ENCODE measurements at regions of chr4 and their contacts with region 1.

Region 1: GRCh38 chr4:152100379-152101201 is 339.8 kb upstream of the GATB start:
- DNase-seq: peak; percentile 70 to 96 (median 80)
- ATAC-seq: peak; percentile 84
- H3K4me3 ChIP-seq: peak overlapping the region; percentile 32
- H3K4me3 Mint-ChIP-seq: peak overlapping the region; percentile 80
- H3K27ac ChIP-seq: peak overlapping the region; percentile 86 to 89
- H3K27ac Mint-ChIP-seq: peak overlapping the region; percentile 95
- H3K4me1 ChIP-seq: peaks cover 100% of the 10 kb centered on the region
- H3K4me1 Mint-ChIP-seq: peaks cover 90% of the 10 kb centered on the region
- H3K27me3 ChIP-seq: no peaks in the 10 kb centered on the region
- H3K27me3 Mint-ChIP-seq: no peaks in the 10 kb centered on the region
- CTCF ChIP-seq: no peak

Region 2: DNA sequence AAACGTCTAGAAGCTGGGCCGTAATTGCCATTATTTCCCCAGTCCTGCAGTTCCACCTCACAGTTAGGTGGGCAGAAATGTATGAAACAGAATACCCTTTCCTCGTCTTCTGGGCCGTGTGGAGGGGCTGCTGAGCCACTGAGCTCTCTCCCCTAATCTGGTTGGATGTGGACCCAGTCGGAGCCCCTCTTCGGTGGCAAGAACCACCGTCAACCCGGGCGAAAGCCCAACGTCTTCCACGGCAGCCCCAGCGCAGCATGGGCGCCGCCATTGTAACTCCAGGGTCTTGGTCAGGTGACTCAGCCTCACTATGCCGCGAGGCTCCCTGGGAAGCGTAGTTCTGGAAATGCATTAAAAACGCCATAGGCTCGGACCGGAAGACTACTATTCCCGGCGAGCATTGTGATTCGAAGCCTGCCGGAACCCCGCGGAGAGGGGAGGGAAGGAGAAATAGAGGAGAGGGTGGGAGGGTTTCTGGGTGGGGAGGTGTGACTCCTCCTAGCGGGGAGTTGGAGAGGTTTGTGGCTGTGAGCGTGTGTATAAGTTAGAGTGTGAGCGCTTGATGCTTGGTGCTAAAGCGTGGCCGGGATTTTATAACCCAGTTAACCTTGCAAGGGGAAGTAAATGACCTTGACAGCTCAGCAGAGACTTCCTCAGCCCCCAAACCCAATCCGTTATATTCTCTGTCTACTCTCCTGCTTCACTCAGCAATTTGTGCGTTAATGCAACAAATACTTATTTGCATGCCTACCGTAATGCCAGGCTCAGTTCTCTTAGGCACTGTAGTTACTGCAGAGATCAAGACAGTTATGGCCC is 339.7 kb before region 1 on chr4 and contains the start of gene GATB:
- CTCF ChIA-PET with region 1: no interaction called
- POLR2A ChIA-PET with region 1: interaction called, 5 read pairs
- intact Hi-C with region 1: loop called (anchors 2 to 5 kb)
- DNase-seq: peak; percentile 85 to 97 (median 88)
- ATAC-seq: peak; percentile 97
- H3K4me3 ChIP-seq: peak within 1 kb of the TSS; percentile 85
- H3K4me3 Mint-ChIP-seq: peak within 1 kb of the TSS; percentile 96
- H3K27ac ChIP-seq: peak within 1 kb of the TSS; percentile 53 to 55
- H3K27ac Mint-ChIP-seq: peak within 1 kb of the TSS; percentile 86
- H3K4me1 ChIP-seq: peaks cover 12% of the 10 kb centered on the region
- H3K4me1 Mint-ChIP-seq: peaks cover 17% of the 10 kb centered on the region
- H3K27me3 ChIP-seq: no peaks in the 10 kb centered on the region
- H3K27me3 Mint-ChIP-seq: no peaks in the 10 kb centered on the region
- CTCF ChIP-seq: peak; percentile 60
- total RNA-seq, gene GATB: 3.6 to 5.8 TPM

Region 3: GRCh38 chr4:152014280-152014679 is 86.3 kb before region 1 on chr4:
- CTCF ChIA-PET with region 1: no interaction called
- POLR2A ChIA-PET with region 1: interaction called, 12 read pairs
- intact Hi-C with region 1: loop called in 1 of 2 experiments (anchors 5 kb)
- DNase-seq: peak in 11 of 14 experiments; percentile 13 to 73 (median 35)
- ATAC-seq: peak; percentile 26
- H3K4me3 ChIP-seq: no peak overlapping the region
- H3K4me3 Mint-ChIP-seq: no peak overlapping the region
- H3K27ac ChIP-seq: peak overlapping the region in 1 of 2 donors; percentile 17
- H3K27ac Mint-ChIP-seq: peak overlapping the region; percentile 74
- H3K4me1 ChIP-seq: peaks cover 51% of the 10 kb centered on the region
- H3K4me1 Mint-ChIP-seq: peaks cover 64% of the 10 kb centered on the region
- H3K27me3 ChIP-seq: no peaks in the 10 kb centered on the region
- H3K27me3 Mint-ChIP-seq: no peaks in the 10 kb centered on the region
- CTCF ChIP-seq: no peak

Region 4: DNA sequence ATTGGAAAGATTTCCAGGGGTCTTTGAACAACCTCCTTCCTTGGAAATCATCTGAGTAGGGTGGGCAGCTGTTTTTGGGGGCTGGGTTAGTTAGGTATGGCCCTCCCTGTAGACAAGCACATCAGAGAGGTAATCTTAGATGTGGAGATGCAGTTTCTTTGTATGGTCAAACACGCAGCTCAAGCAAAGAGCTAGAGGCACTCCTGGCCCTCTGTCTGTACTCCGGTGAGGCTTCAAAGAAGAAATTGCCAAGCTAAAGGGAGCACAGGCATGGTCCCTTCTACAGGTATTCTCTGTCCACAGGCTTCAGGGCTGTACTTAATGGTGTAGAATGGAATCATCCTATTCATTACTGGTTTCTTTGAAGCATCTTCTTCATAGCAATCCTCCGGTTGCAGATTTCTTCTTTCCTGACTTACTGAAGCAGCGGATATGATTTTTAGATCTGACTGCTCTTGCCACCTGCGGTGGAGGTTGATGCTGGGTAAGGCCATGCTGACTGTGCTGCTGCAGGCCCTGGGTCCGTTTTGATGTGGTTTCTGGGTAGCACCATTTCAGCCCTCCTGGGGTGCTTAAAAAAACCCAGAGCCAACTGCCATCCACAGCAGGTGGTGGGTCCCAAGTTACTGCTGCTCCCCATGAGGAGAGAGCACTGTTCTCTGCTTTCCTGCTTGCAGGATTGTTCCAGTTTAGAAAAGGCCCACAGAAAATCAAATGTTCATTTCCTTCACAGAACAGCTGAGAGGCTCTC is 20.9 kb before region 1 on chr4:
- CTCF ChIA-PET with region 1: interaction called, 3 read pairs
- POLR2A ChIA-PET with region 1: interaction called, 52 read pairs
- intact Hi-C with region 1: loop called in 1 of 2 experiments (anchors 2 kb)
- DNase-seq: peak in 10 of 14 experiments; percentile 25 to 83 (median 53)
- ATAC-seq: peak; percentile 94
- H3K4me3 ChIP-seq: no peak overlapping the region
- H3K4me3 Mint-ChIP-seq: peak overlapping the region; percentile 38
- H3K27ac ChIP-seq: peak overlapping the region; percentile 40 to 63
- H3K27ac Mint-ChIP-seq: peak overlapping the region; percentile 93
- H3K4me1 ChIP-seq: peaks cover 56% of the 10 kb centered on the region
- H3K4me1 Mint-ChIP-seq: peaks cover 97% of the 10 kb centered on the region
- H3K27me3 ChIP-seq: no peaks in the 10 kb centered on the region
- H3K27me3 Mint-ChIP-seq: no peaks in the 10 kb centered on the region
- CTCF ChIP-seq: no peak

Region 5: GRCh38 chr4:152185786-152186550 is 85.4 kb after region 1 on chr4:
- CTCF ChIA-PET with region 1: no interaction called
- POLR2A ChIA-PET with region 1: interaction called, 11 read pairs
- intact Hi-C with region 1: no loop called
- DNase-seq: no peak
- ATAC-seq: no peak
- H3K4me3 ChIP-seq: no peak overlapping the region
- H3K4me3 Mint-ChIP-seq: no peak overlapping the region
- H3K27ac ChIP-seq: no peak overlapping the region
- H3K27ac Mint-ChIP-seq: no peak overlapping the region
- H3K4me1 ChIP-seq: peaks cover 28% of the 10 kb centered on the region
- H3K4me1 Mint-ChIP-seq: peaks cover 57% of the 10 kb centered on the region
- H3K27me3 ChIP-seq: no peaks in the 10 kb centered on the region
- H3K27me3 Mint-ChIP-seq: no peaks in the 10 kb centered on the region
- CTCF ChIP-seq: no peak

Region 6: GRCh38 chr4:152255437-152256011 is 154.9 kb after region 1 on chr4:
- CTCF ChIA-PET with region 1: no interaction called
- POLR2A ChIA-PET with region 1: interaction called, 33 read pairs
- intact Hi-C with region 1: loop called in 1 of 2 experiments (anchors 10 kb)
- DNase-seq: peak; percentile 19 to 88 (median 62)
- ATAC-seq: peak; percentile 95
- H3K4me3 ChIP-seq: no peak overlapping the region
- H3K4me3 Mint-ChIP-seq: no peak overlapping the region
- H3K27ac ChIP-seq: peak overlapping the region in 1 of 2 donors; percentile 28
- H3K27ac Mint-ChIP-seq: no peak overlapping the region
- H3K4me1 ChIP-seq: peaks cover 41% of the 10 kb centered on the region
- H3K4me1 Mint-ChIP-seq: peaks cover 4% of the 10 kb centered on the region
- H3K27me3 ChIP-seq: no peaks in the 10 kb centered on the region
- H3K27me3 Mint-ChIP-seq: no peaks in the 10 kb centered on the region
- CTCF ChIP-seq: no peak

Region 7: GRCh38 chr4:152304220-152304619 is 203.6 kb after region 1 on chr4:
- CTCF ChIA-PET with region 1: no interaction called
- POLR2A ChIA-PET with region 1: no interaction called
- intact Hi-C with region 1: no loop called
- DNase-seq: no peak
- ATAC-seq: no peak
- H3K4me3 ChIP-seq: no peak overlapping the region
- H3K4me3 Mint-ChIP-seq: no peak overlapping the region
- H3K27ac ChIP-seq: no peak overlapping the region
- H3K27ac Mint-ChIP-seq: no peak overlapping the region
- H3K4me1 ChIP-seq: no peaks in the 10 kb centered on the region
- H3K4me1 Mint-ChIP-seq: no peaks in the 10 kb centered on the region
- H3K27me3 ChIP-seq: no peaks in the 10 kb centered on the region
- H3K27me3 Mint-ChIP-seq: no peaks in the 10 kb centered on the region
- CTCF ChIP-seq: no peak

Region 8: DNA sequence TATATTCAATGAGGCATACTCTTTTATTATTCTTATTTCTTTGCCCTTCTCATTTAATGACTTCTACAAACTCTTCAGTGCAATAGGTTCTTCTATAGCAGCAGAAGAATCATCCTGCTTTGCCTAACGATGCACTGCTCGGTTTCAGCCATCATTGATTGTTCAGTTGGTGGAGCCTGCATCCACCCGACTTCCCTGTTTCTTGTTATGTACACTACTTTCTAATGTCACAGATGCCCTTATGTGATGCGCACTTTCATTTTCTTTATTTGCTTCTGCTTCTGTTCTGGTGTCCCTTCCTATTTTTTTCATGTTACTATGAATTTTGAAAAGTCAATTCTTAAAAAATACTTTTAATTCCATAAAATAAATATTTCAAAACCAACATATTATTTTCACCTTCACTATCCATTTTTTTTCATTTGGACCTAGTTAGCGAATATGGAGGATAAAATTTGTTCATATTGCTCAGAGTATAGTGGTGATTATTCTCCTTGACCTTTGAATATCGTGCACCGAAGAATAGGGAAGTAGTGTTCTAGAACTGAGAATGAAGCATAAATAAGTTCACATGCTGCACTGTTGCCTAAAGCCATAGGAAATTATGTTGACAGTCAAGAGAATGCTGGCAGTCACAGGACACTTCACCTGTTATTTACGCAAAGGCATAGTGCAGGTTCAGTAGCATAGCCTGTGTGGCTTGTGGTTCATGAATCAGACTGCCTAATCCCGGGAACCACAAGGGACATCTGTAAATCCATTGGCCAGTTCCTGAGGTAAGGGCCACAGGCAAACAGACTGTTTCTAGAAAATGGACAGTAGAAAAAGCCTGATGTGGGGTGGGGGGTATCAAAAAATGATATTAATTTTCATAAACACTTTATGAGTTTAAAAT is 1709.6 kb after region 1 on chr4:
- CTCF ChIA-PET with region 1: no interaction called
- POLR2A ChIA-PET with region 1: no interaction called
- intact Hi-C with region 1: no loop called
- DNase-seq: no peak
- ATAC-seq: no peak
- H3K4me3 ChIP-seq: no peak overlapping the region
- H3K4me3 Mint-ChIP-seq: no peak overlapping the region
- H3K27ac ChIP-seq: no peak overlapping the region
- H3K27ac Mint-ChIP-seq: no peak overlapping the region
- H3K4me1 ChIP-seq: peaks cover 4% of the 10 kb centered on the region
- H3K4me1 Mint-ChIP-seq: peaks cover 18% of the 10 kb centered on the region
- H3K27me3 ChIP-seq: no peaks in the 10 kb centered on the region
- H3K27me3 Mint-ChIP-seq: peaks cover 11% of the 10 kb centered on the region
- CTCF ChIP-seq: no peak

Measured in CD4-positive, alpha-beta T cell (primary cell).